ENCODE measurements at regions of chr11 and their contacts with region 1.

Region 1: DNA sequence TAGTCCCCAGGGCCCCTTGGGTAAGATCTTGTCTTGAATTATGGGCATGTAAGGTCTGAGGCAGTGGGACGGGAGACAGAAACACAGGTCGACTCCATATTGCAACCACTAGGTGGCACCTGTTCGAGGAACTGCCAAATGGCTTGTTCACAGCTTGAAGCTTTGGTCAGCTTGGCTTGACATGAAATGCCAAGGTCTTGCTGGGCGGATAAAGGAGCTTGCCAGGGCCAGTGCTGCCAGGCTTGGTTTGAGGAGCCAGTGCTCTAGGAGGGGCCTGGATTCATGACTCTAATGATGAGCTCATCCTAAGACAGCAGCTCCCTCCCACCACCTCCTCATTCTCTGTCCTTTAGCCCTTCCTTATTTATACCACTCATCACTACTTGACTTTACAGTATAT is 11.9 kb upstream of the NRIP3 start:
- DNase-seq: peak; percentile 44
- H3K4me3 Mint-ChIP-seq: no peak overlapping the region
- H3K27ac Mint-ChIP-seq: no peak overlapping the region
- H3K4me1 Mint-ChIP-seq: peaks cover 31% of the 10 kb centered on the region
- H3K27me3 Mint-ChIP-seq: peaks cover 15% of the 10 kb centered on the region

Region 2: DNA sequence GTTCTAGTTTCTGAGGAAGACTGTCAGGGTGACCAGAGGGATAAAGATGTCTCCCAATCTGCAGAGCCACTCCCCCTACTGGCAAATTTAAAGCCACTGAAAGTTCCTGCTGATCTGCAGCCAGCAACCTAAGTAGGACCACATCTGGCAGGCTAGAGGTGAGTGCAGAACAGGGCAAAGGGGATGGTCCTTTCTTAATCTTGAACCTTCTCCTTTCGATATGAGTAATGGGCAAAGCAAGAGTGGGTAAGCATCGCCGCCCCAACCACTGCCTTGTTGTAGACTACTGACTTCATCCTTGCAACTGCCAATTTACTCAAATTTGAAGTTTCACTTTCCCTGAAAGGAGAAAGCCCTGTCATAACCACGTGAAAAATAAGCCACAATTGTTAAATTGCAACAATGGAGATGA is 45.0 kb after region 1 on chr11:
- intact Hi-C with region 1: loop called (anchors 2 kb)
- DNase-seq: peak; percentile 48
- H3K4me3 Mint-ChIP-seq: no peak overlapping the region
- H3K27ac Mint-ChIP-seq: peak overlapping the region; percentile 40
- H3K4me1 Mint-ChIP-seq: peaks cover 12% of the 10 kb centered on the region
- H3K27me3 Mint-ChIP-seq: peaks cover 16% of the 10 kb centered on the region

Region 3: DNA sequence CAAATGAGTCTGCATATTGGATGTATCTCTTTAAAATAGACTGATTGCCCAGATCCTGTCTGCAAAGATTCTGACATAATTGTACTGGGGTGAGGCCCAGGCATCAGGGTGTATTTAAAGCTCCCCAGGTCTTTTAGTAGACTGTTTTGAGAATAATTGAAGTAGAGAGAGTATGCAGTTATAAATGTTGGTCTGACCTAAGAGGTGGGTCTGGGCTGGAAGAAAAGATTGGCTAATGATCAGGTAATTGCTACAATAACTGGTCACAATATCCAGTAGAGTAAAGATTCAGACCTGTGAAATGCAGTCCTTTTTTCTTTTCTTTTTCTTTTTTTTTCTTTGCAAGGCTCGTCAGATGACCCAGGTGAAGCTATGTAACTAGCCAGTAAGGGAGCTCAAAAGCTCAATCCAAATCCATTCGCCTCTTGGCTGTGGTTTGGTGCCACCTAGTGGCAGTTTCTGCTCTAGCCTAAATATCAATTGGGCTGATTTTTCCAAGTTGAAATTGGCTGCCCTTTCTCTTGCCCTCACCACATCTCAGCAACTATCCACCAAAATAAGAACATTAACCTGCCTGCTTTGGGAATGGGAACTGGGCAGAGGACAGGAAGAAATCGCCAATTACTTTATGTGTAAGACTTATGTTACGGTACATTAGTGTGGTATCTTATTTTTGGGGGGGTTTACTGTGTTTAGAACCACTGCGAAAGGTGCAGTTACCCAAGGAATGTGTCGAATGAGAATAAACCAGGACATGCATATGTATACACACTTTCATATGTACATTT is 491.0 kb after region 1 on chr11:
- intact Hi-C with region 1: loop called (anchors 1 kb)
- DNase-seq: peak; percentile 68
- H3K4me3 Mint-ChIP-seq: no peak overlapping the region
- H3K27ac Mint-ChIP-seq: no peak overlapping the region
- H3K4me1 Mint-ChIP-seq: peaks cover 6% of the 10 kb centered on the region
- H3K27me3 Mint-ChIP-seq: no peaks in the 10 kb centered on the region

Measured in activated T-helper 1 cell treated with anti-CD3 and anti-CD28 coated beads, Interleukin-12 subunit alpha, Interleukin-12 subunit beta, Interleukin-2, Interleukin-4 antibody, amounts not matched to agents 30 ng/mL and 10 ng/mL and 1 ng/mL, durations not matched to agents 14 hours and 24 hours and 36 hours (primary cell).